ENCODE measurements at regions of chr17 and their contacts with region 1.

Region 1: GRCh38 chr17:5194346-5194745 is 2.7 kb upstream of the ZNF594 start:
- DNase-seq: no peak
- ATAC-seq: no peak
- H3K4me3 ChIP-seq: no peak overlapping the region
- H3K27ac ChIP-seq: no peak overlapping the region
- H3K4me1 ChIP-seq: peaks cover 17% of the 10 kb centered on the region
- H3K27me3 ChIP-seq: no peaks in the 10 kb centered on the region
- CTCF ChIP-seq: no peak
- EP300 ChIP-seq: no peak
- POLR2A ChIP-seq: no peak
- RAD21 ChIP-seq: no peak

Region 2: GRCh38 chr17:5237541-5238016 is 43.2 kb after region 1 on chr17:
- CTCF ChIA-PET with region 1: interaction called, 33 read pairs
- POLR2A ChIA-PET with region 1: no interaction called
- in situ Hi-C with region 1: no loop called
- intact Hi-C with region 1: loop called (anchors 1 kb)
- DNase-seq: peak; percentile 81
- ATAC-seq: peak; percentile 94
- H3K4me3 ChIP-seq: no peak overlapping the region
- H3K27ac ChIP-seq: no peak overlapping the region
- H3K4me1 ChIP-seq: peaks cover 17% of the 10 kb centered on the region
- H3K27me3 ChIP-seq: peaks cover 5 to 26% of the 10 kb centered on the region in 2 experiments; a peak in 4 of 5 replicates
- CTCF ChIP-seq: peak; percentile 93
- EP300 ChIP-seq: no peak
- POLR2A ChIP-seq: no peak
- RAD21 ChIP-seq: peak; percentile 86

Measured in HepG2 (cell line).